ENCODE measurements at regions of chr11 and their contacts with region 1.

Region 1: DNA sequence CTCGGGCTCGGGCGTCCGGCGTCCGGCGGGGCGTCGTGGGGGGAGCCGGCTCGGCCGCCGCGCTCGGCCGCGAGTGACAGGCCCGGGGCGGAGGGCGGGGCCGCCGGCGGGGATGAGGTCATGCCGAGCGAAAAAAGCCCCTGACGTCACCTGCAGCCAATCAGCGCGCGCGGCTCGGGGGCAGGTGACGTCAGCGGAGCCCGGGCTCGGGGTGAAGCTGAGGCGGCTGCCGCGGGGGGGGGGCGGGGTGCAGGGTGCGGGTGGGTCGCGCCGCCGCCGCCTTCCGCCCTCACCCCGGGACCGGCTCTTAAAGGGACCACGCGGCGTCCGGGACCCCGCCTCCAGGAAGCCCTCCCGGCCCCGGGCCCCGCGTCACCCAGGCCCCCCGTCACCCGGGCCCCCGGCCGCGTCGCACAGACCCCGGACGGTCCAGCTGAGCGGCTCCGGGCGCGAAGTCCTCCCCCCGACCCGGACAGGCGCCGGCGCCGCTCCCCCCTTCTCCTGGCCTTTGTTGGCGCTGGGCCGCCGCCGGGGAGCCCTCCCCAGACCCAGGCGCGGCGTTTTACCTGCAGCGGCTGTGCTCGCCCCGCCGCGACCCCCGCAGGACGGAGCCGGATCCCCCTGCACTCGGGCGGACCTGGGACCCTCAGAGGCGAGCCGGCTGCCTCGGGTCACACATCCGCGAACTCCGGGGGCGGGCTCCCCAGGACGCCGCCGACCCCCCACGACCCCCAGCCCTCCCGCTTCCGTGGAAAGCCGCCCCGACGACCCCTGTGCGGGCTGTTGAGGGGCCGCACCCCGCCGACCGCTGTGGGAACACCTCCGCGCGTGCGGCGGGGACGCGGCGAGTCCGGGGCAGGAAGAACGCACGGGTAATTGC is at the start of gene DUSP8:
- DNase-seq: peak; percentile 65 to 96
- H3K4me3 ChIP-seq: peak within 1 kb of the TSS; percentile 57 to 93
- H3K27ac ChIP-seq: peak within 1 kb of the TSS; percentile 80 to 87
- H3K4me1 ChIP-seq: peaks cover 21 to 27% of the 10 kb centered on the region in 2 donors
- H3K27me3 ChIP-seq: no peaks in the 10 kb centered on the region
- CTCF ChIP-seq: no peak
- total RNA-seq, gene DUSP8: 27.0 TPM

Region 2: GRCh38 chr11:1202776-1203504 is 369.5 kb before region 1 on chr11:
- intact Hi-C with region 1: loop called (anchors 2 kb)
- DNase-seq: peak in 1 of 2 donors; percentile 68
- H3K4me3 ChIP-seq: no peak overlapping the region
- H3K27ac ChIP-seq: no peak overlapping the region
- H3K4me1 ChIP-seq: no peaks in the 10 kb centered on the region
- H3K27me3 ChIP-seq: no peaks in the 10 kb centered on the region
- CTCF ChIP-seq: peak; percentile 86 to 96 (median 87)

Region 3: GRCh38 chr11:1458340-1459218 is 113.9 kb before region 1 on chr11:
- intact Hi-C with region 1: loop called (anchors 5 kb)
- DNase-seq: peak in 1 of 2 donors; percentile 86
- H3K4me3 ChIP-seq: no peak overlapping the region
- H3K27ac ChIP-seq: peak overlapping the region; percentile 86 to 89
- H3K4me1 ChIP-seq: peaks cover 14 to 28% of the 10 kb centered on the region in 2 donors
- H3K27me3 ChIP-seq: no peaks in the 10 kb centered on the region
- CTCF ChIP-seq: peak; percentile 15 to 41 (median 32)

Region 4: DNA sequence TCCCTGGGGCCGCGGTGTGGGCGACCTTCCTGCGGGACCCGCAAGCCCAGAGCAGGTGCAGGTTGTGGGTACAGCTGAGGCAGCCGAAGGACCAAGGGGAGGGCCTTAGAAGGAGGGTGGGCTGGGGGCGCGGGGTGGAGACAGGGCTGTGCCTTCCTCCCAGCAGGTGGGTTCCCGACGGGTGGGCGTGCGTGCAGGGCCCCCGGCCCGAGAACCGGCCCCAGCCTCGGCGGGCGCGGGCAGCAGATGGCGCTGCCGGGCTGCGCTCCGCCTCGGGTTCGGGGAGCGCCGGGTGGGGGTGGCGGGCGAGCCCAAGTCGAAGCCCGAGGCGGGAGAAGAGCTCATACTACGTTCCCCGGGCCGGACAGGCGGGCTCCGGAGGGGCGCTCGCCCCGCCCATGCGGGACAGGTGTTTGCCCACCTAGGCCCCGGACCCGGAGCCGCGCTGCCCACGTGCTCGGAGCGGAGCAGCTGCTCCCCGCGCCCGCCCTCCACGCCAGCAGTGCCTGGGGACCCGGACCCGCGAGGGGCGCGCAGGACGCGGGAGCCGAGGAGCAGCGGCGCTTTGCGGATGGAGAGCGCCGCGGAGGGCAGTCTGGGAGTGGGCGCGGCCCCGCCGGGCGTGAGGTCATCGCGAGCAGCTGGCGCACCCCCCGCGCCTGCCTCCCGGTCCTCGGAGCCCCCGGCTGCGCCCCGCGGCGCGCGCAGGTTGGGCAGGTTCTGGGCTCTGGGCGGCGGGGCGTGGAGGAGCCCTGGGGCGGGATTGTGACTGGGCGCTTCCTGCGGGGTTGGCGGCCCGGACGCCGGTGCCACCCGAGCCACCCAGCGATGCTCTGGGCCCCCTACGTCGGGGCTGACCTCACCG is 25.7 kb before region 1 on chr11:
- intact Hi-C with region 1: loop called (anchors 1 kb)
- DNase-seq: peak in 1 of 2 donors; percentile 77
- H3K4me3 ChIP-seq: peak overlapping the region; percentile 46 to 70
- H3K27ac ChIP-seq: peak overlapping the region; percentile 75 to 87
- H3K4me1 ChIP-seq: peaks cover 8 to 24% of the 10 kb centered on the region in 2 donors
- H3K27me3 ChIP-seq: no peaks in the 10 kb centered on the region
- CTCF ChIP-seq: peak; percentile 75 to 94 (median 86)

Region 5: DNA sequence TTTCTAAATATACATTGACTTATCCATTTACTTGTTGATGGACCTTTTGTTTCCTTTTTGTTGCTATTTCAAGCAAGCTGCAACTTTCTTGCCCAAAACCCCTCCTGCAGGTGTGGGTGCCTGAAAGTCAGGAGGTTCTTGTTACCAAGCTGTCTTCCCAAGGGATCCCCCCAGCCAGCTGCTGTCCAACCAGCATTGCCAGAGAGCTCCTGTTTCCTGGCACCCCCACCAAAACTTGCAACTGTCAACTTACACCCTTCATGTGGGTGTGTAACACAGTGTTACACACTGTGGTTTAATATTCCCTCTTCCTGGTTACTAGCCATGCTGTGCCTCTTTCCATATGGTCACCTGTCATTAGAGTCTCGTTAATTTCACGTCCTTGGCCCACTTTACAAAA is 14.3 kb after region 1 on chr11:
- intact Hi-C with region 1: no loop called
- DNase-seq: no peak
- H3K4me3 ChIP-seq: no peak overlapping the region
- H3K27ac ChIP-seq: no peak overlapping the region
- H3K4me1 ChIP-seq: no peaks in the 10 kb centered on the region
- H3K27me3 ChIP-seq: no peaks in the 10 kb centered on the region
- CTCF ChIP-seq: no peak

Region 6: DNA sequence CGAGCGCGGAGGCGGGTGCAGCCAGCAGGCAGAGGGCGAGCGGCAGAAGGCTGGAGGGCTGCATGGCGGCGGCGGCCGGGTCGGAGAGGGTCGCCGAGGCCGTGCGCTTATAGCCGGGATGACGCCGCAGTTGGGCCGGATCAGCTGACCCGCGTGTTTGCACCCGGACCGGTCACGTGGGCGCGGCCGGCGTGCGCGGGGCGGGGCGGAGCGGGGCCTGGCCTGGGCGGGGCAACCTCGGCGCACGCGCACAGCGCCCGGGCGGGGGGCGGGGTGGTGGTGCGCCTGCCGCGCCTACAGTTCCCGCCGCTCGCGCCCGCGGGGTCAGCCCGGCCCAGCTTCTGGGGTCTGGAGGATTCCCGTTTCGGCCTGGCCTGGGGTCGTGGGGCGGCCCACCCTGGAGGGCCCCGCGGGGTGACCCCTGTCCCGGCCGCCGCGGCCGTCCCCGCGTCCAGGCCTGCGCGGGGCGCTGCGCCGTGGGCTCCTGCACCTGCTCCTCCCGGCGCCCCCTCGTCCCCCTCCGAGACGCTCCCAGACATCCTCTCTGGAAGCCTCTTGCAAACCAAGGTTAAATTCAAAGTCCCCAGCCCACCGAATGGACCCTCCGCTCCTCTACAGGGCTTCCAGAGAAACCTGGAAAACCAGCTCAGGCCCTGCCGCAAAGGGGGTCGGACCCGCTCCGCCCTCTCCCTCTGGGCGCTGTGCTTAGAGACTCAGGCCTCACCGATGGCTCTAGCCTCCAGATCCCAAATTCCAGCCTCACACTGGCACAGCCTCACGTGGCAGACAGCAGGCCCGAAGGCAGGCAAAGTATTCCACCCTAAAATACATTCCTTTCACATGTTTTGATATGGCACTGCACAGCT is 191.6 kb after region 1 on chr11 and contains the start of gene CTSD:
- intact Hi-C with region 1: loop called (anchors 10 kb)
- DNase-seq: peak; percentile 16 to 93
- H3K4me3 ChIP-seq: peak within 1 kb of the TSS; percentile 74 to 96
- H3K27ac ChIP-seq: peak within 1 kb of the TSS; percentile 83 to 94
- H3K4me1 ChIP-seq: peaks cover 24 to 43% of the 10 kb centered on the region in 2 donors
- H3K27me3 ChIP-seq: no peaks in the 10 kb centered on the region
- CTCF ChIP-seq: no peak
- total RNA-seq, gene CTSD: 777 TPM

Region 7: DNA sequence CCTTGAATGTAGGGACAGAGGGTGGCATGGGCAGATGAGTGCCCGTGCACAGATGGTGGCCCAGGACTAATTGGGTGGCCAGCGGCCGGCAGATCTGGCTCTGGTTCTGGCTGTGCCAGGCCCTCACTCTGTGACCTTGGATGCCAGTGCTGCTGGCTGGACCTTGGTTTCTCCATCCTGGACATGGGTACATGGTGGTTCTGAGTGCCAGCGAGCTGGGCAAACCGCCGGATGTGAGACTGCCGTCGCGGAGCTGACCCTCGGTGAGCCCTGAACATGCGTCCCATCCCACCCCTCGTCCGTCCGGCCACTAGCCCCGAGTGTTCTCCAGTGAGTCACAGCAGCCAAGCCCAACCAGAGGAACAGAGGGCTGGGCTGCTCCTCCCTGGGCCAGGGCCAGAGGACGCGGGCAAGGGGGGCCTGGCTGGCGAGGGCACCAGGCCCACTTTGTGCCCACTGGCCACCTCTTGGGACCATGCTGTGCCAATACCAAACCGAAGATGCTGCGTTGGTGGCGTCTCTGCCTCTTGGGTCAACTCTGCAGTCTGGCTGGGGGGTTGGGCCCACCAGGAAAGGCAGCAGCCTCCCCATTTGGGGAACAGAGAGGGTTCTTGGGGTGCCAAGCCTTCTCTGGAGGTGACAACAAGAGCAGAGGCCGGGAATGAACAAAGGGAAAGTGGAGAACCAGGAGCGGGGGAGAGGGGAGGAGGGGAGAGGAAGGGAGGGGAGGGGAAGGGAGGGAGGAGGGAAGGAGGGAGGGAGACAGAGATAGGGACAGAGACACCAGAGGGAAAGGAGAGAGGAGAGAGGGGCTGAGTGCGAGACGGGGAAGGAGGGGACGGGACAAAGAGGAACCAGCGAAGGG is 291.1 kb after region 1 on chr11:
- intact Hi-C with region 1: loop called (anchors 10 kb)
- DNase-seq: peak; percentile 81 to 96
- H3K4me3 ChIP-seq: peak overlapping the region; percentile 32 to 34
- H3K27ac ChIP-seq: peak overlapping the region; percentile 86 to 94
- H3K4me1 ChIP-seq: peaks cover 15 to 46% of the 10 kb centered on the region in 2 donors
- H3K27me3 ChIP-seq: no peaks in the 10 kb centered on the region
- CTCF ChIP-seq: no peak